Mammary epithelial cell (primary cell): ENCODE measurements at regions of chr6 and their contacts with region 1.

Region 1: DNA sequence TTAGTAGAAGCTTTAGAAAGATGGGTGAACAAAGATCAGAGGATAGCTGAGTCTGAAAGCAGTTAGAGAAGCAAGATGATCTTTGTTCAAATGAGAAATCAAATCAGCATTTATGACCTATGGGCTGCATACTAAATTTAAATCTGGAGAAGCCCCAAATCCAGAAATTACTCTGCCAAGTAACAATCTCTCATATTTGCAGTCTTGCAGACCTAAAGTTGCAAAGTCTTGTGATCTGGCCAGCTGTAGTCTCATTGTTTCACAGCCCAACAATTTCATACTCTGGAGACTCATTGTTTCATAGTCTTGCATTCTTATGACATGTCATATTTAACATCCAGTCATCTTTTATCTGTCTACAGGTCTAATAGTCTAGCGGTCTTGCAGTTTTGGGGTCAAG is 364.9 kb upstream of the RSPO3 start:
- DNase-seq: no peak
- H3K4me3 ChIP-seq: no peak overlapping the region
- H3K27ac ChIP-seq: no peak overlapping the region
- H3K4me1 ChIP-seq: no peaks in the 10 kb centered on the region
- H3K27me3 ChIP-seq: no peaks in the 10 kb centered on the region
- CTCF ChIP-seq: no peak

Region 2: DNA sequence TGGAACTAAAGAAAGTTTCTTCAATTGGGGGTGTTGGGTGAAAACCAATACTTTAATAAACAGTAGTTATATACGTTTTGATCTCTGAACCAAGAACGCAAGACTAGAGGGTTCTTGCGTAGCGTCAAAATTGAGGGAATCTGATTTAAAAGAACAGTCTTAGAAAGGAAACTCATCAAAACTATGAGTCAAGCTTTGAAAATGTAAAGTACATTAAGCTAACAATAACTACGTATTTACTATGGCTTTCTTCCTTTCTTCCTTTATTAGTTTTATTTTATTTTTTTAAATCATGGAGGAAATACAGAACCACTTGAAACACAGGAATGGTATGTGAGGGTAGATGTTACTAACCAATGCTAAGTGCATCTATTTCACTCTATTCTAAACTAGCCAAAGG is 77.9 kb after region 1 on chr6:
- CTCF ChIA-PET with region 1: no interaction called
- dilution Hi-C with region 1: loop called (anchors 5 kb)
- in situ Hi-C with region 1: no loop called
- intact Hi-C with region 1: no loop called
- DNase-seq: no peak
- H3K4me3 ChIP-seq: no peak overlapping the region
- H3K27ac ChIP-seq: no peak overlapping the region
- H3K4me1 ChIP-seq: no peaks in the 10 kb centered on the region
- H3K27me3 ChIP-seq: peaks cover 2% of the 10 kb centered on the region
- CTCF ChIP-seq: no peak